Breast epithelium (tissue), 4 donors: ENCODE measurements at regions of chr1 and their contacts with region 1.

Region 1: DNA sequence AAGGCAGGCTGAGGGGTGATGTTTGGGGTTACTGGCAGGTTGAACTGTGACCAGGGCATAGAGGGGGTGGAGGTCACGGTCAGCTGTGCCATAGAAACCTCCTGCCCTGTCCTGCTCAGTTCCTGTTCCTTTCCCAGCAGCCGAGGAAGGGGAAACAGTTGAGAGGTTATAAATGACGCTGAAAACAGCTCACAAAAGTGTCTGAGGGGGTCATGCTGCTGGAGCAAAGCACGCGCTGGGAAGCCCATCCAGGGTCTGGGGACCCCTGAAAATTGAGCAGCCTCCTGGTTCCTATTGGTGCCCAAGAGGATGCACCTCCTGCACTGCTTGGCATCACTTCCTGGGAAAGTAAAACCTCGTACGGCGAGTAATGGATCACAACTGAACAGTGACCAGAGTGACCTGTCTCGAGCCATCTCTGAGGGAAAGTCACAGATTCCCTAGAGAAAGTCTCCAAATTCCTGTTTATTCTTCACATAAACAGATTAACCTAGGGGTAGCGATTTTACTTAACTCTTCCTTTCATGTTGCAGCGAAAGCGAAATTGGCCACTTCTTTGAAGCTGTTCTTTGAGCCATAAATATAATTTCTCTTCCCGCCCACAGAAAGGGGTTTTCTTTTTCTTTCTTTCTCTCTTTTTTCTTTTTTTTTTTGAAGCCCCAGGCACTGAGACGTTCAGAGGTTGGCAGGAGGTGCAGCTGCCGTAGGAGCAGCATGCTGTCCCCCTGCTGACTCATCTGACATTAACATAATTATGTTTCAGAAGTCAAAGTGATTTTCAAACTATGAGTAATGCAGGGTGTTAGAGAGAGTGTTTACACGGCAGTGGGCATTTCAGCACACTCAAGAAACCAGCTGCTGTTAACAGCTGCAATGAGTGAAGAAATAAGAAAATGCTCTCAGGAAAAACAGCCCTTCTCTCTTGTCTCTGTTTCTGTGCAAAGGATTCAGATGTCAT is 41.8 kb upstream of the ATF3 start:
- DNase-seq: no peak
- H3K4me3 ChIP-seq: peak overlapping the region; percentile 44 to 69 (median 48)
- H3K27ac ChIP-seq: peak overlapping the region; percentile 82 to 87
- H3K4me1 ChIP-seq: no peaks in the 10 kb centered on the region
- H3K27me3 ChIP-seq: no peaks in the 10 kb centered on the region
- CTCF ChIP-seq: peak in 1 of 3 donors; percentile 29
- POLR2A ChIP-seq: no peak

Region 2: DNA sequence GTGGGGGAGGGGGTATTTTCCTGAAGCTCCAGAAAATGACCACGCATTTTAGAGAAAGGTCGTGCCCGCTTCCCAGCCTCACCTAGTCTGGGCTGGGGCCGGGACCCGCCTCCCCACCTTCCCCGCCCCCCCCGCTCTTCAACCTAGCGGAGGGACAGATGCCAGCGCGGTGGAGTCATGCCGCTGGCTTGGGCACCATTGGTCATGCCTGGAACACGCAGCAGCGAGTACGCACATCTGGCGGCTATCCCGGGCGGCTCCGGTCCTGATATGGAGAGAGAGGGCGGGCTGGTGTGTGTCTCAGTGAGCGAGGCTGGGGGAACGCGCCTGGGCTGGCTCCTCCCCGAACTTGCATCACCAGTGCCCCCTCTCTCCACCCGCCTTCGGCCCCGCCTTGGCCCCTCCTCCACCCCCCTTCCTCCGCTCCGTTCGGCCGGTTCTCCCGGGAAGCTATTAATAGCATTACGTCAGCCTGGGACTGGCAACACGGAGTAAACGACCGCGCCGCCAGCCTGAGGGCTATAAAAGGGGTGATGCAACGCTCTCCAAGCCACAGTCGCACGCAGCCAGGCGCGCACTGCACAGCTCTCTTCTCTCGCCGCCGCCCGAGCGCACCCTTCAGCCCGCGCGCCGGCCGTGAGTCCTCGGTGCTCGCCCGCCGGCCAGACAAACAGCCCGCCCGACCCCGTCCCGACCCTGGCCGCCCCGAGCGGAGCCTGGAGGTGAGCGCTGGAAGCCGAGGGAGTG is 41.6 kb after region 1 on chr1 and contains the start of gene ATF3:
- intact Hi-C with region 1: loop called (anchors 5 kb)
- DNase-seq: peak; percentile 100
- H3K4me3 ChIP-seq: peak within 1 kb of the TSS; percentile 74 to 93 (median 82)
- H3K27ac ChIP-seq: peak within 1 kb of the TSS; percentile 96 to 99
- H3K4me1 ChIP-seq: no peaks in the 10 kb centered on the region
- H3K27me3 ChIP-seq: no peaks in the 10 kb centered on the region
- CTCF ChIP-seq: peak in 1 of 3 donors; percentile 23
- POLR2A ChIP-seq: peak; percentile 97
- total RNA-seq, gene ATF3: 6.7 to 90.9 (median 26.9) TPM

Region 3: DNA sequence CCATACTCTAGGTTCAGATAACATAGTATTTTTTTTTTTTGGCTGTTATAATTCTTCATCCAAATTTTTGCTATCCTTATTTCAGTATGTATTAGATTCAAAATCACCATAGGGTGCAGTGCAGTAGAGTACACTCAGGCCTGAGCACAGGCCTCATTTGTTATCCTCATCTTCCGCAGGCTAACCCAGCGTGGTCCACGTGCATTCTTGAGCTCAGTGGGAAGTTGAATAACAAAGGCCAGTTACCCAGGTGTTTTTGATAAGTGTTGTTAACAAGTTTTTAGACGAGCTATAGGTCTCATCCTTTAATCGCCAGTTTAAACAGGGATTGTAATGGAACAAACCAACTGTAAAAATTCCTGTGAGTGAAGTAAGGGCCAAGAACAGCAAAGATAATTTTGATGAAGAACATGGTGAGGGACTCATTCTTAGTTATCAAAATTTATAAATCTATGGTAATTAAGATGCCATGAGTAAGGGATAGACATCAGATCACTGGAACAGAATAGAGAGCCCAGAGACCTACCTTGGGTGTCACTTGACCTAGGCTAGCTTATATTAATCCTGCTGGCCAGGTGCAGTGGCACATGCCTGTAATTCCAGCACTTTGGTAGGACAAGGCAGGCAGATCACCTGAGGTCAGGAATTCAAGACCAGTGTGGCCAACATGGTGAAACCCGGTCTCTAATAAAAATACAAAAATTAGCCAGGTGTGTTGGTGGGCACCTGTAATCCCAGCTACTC is 313.3 kb after region 1 on chr1:
- intact Hi-C with region 1: no loop called
- DNase-seq: no peak
- H3K4me3 ChIP-seq: no peak overlapping the region
- H3K27ac ChIP-seq: no peak overlapping the region
- H3K4me1 ChIP-seq: no peaks in the 10 kb centered on the region
- H3K27me3 ChIP-seq: no peaks in the 10 kb centered on the region
- CTCF ChIP-seq: no peak
- POLR2A ChIP-seq: no peak